SK-N-SH (cell line): ENCODE measurements at regions of chr7 and their contacts with region 1.

Region 1: DNA sequence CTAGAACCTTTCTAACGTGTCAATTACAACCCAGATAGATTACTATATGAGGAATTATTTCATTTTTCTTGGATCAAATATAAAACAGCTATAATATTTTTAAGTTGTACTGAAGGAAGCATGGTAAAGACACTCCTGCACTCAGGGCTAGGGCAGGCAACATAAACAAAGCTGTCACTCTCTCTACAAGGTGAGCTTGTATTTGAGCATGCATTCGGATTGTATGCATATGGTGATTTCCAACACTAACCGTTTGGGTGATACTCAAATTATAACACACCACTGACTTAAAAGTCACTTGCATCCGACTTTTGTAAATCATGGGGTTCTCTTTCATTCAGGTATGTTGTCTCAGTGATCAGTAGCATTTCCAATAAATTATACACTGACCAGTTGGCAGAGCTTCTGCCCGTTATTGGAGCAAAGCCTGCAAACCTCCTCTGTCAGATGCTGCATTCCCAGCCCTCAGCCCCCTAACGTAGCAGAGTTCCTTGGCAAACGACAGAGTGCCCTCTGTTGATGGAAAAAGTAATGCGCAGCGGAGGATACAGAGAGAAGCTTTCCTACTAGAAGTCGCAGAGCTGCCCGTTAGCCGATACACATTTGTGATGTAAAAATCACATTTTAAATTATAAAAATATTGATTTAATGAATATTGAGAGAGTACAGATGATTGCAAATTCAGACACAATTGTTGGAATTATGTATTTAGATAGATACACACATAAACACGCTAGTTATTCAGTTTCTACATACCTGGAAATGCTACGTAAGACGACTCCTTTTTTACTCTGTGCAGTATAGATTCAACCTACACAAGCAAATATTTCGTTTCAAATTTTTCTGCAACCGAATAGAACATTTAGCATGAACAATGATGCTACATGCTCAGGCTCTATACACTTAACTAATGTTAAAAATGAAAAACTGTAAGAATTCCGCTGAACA is 173.9 kb upstream of the SP4 start:
- DNase-seq: peak; percentile 62
- H3K4me3 ChIP-seq: no peak overlapping the region; a peak in 1 of 4 replicates
- H3K27ac ChIP-seq: no peak overlapping the region
- H3K4me1 ChIP-seq: no peaks in the 10 kb centered on the region
- H3K27me3 ChIP-seq: peaks cover 32% of the 10 kb centered on the region; the same call in 1 of the 2 replicates
- CTCF ChIP-seq: peak; percentile 73
- EP300 ChIP-seq: no peak
- RAD21 ChIP-seq: peak; percentile 70

Region 2: GRCh38 chr7:20778063-20778721 is 475.8 kb before region 1 on chr7:
- CTCF ChIA-PET with region 1: interaction called, 68 read pairs
- POLR2A ChIA-PET with region 1: no interaction called
- DNase-seq: peak; percentile 88
- H3K4me3 ChIP-seq: peak overlapping the region; percentile 24 to 43; a peak in 3 of 4 replicates
- H3K27ac ChIP-seq: no peak overlapping the region
- H3K4me1 ChIP-seq: no peaks in the 10 kb centered on the region; a peak in 1 of 4 replicates
- H3K27me3 ChIP-seq: peaks cover 82% of the 10 kb centered on the region
- CTCF ChIP-seq: peak; percentile 76
- EP300 ChIP-seq: no peak
- RAD21 ChIP-seq: peak; percentile 72

Region 3: DNA sequence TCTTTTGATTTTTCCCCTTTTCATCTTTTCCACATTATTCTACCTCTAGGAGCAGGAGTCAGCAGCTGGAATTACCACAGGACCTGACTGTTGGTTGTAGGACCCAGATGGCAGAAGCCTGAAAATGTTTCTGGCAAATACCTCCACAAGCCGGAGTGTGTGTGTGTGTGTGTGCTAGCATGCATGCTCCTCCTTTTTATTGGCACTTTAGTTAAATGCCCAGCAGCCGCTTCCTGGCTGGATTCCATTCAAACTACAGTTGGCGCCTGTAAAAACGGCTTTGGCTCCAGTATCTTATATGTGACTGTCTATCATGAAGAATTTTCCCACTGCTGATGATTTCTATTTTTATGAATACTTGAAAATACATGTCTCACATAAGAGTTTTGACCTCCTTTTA is 145.8 kb before region 1 on chr7:
- CTCF ChIA-PET with region 1: no interaction called
- POLR2A ChIA-PET with region 1: no interaction called
- DNase-seq: no peak
- H3K4me3 ChIP-seq: no peak overlapping the region
- H3K27ac ChIP-seq: no peak overlapping the region
- H3K4me1 ChIP-seq: no peaks in the 10 kb centered on the region
- H3K27me3 ChIP-seq: no peaks in the 10 kb centered on the region
- CTCF ChIP-seq: no peak
- EP300 ChIP-seq: no peak
- RAD21 ChIP-seq: no peak

Region 4: GRCh38 chr7:21269021-21269420 is 15.0 kb after region 1 on chr7:
- CTCF ChIA-PET with region 1: interaction called, 37 read pairs
- POLR2A ChIA-PET with region 1: no interaction called
- DNase-seq: no peak
- H3K4me3 ChIP-seq: no peak overlapping the region
- H3K27ac ChIP-seq: no peak overlapping the region
- H3K4me1 ChIP-seq: no peaks in the 10 kb centered on the region
- H3K27me3 ChIP-seq: peaks cover 7% of the 10 kb centered on the region; the same call in 1 of the 2 replicates
- CTCF ChIP-seq: no peak
- EP300 ChIP-seq: no peak
- RAD21 ChIP-seq: no peak

Region 5: GRCh38 chr7:21507626-21508343 is 253.8 kb after region 1 on chr7:
- CTCF ChIA-PET with region 1: interaction called, 12 read pairs
- POLR2A ChIA-PET with region 1: no interaction called
- DNase-seq: peak; percentile 19
- H3K4me3 ChIP-seq: no peak overlapping the region
- H3K27ac ChIP-seq: no peak overlapping the region
- H3K4me1 ChIP-seq: no peaks in the 10 kb centered on the region
- H3K27me3 ChIP-seq: no peaks in the 10 kb centered on the region
- CTCF ChIP-seq: peak; percentile 75
- EP300 ChIP-seq: no peak
- RAD21 ChIP-seq: peak; percentile 89

Region 6: DNA sequence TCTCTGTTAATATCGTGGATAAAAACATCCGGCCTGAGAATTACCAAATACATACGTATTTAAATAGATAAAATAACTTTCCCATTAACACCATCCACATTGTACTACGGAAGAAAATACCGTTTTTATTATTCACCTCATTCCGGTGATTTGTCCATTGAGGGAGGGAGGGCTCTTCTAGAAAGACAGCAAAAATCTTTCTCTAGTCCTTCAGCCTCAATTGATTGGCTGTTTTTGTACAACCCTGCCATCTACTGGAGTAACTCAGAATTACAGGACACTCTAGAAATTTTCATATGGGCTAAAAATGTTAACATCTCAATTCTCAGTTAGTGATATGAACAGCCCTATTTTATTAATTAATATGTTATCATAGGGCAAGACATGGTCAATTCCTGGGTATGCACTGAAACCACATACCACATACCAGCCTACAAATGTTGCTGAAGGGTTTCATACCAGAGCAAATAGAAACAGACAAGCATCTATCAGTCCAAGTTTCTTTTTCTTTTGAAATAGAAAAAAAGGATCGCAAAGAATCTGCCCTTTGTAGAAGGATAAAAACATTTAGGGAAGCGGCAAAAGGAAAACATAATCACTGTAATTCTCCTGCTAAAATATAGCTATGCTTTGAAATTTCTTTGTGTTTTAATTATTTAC is 747.5 kb after region 1 on chr7:
- CTCF ChIA-PET with region 1: interaction called, 21 read pairs
- POLR2A ChIA-PET with region 1: no interaction called
- DNase-seq: peak; percentile 66
- H3K4me3 ChIP-seq: no peak overlapping the region; a peak in 1 of 4 replicates
- H3K27ac ChIP-seq: no peak overlapping the region
- H3K4me1 ChIP-seq: no peaks in the 10 kb centered on the region
- H3K27me3 ChIP-seq: peaks cover 24% of the 10 kb centered on the region
- CTCF ChIP-seq: peak; percentile 97
- EP300 ChIP-seq: no peak
- RAD21 ChIP-seq: peak; percentile 92